ENCODE measurements at regions of chr5 and their contacts with region 1.

Region 1: GRCh38 chr5:137498736-137499505 is at the start of gene SPOCK1:
- DNase-seq: peak; percentile 94
- H3K4me3 ChIP-seq: peak within 1 kb of the TSS; percentile 54 to 77
- H3K27ac ChIP-seq: peak within 1 kb of the TSS in 1 of 2 experiments; percentile 55; a peak in 1 of 4 replicates
- H3K4me1 ChIP-seq: peaks cover 6% of the 10 kb centered on the region in 2 experiments; a peak in 2 of 4 replicates
- H3K27me3 ChIP-seq: no peaks in the 10 kb centered on the region
- CTCF ChIP-seq: peak; percentile 62
- EP300 ChIP-seq: 0 out of 4 replicates have a peak, but pooled peaks of 1 of the 2 experiments have one; percentile 11
- RAD21 ChIP-seq: peak; percentile 81
- polyA plus RNA-seq, gene SPOCK1: 9.1 and 11.3 TPM in 2 replicates

Region 2: GRCh38 chr5:137328463-137328862 is 170.5 kb before region 1 on chr5:
- CTCF ChIA-PET with region 1: interaction called, 19 read pairs
- POLR2A ChIA-PET with region 1: no interaction called
- DNase-seq: no peak
- H3K4me3 ChIP-seq: no peak overlapping the region
- H3K27ac ChIP-seq: no peak overlapping the region
- H3K4me1 ChIP-seq: no peaks in the 10 kb centered on the region; a peak in 1 of 4 replicates
- H3K27me3 ChIP-seq: no peaks in the 10 kb centered on the region
- CTCF ChIP-seq: no peak
- EP300 ChIP-seq: no peak
- RAD21 ChIP-seq: no peak

Region 3: DNA sequence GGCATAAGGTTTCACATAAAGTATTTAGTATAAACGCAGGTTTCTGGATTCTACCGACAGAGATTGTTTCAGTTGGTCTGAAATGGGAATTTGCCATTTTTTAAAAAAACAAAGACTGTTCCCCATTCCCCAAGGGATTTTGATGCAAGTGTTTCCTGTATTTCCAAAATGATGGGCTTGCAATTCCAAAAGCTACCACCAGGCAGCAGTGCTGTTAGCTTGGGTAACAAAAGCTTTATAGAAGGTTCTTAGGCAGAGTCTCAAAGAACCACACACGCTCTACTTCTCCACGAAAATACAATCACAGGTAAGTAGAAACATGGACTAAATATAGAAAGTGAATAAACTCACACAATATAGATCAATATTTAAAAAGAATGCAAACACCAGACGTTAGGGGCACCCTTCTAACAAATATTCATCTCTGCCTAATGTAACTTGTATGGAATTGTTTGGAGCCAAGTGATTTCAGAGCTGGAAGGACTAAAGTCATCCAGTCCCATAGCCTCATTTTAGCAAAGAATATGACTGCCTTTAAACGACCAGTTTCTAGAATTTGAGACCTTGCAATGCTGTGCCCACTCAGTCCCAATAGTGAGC is 154.1 kb before region 1 on chr5:
- CTCF ChIA-PET with region 1: interaction called, 46 read pairs
- POLR2A ChIA-PET with region 1: no interaction called
- DNase-seq: peak; percentile 28
- H3K4me3 ChIP-seq: peak overlapping the region in 1 of 2 experiments; percentile 18; a peak in 1 of 4 replicates
- H3K27ac ChIP-seq: no peak overlapping the region
- H3K4me1 ChIP-seq: peaks cover 12 to 14% of the 10 kb centered on the region in 2 experiments; a peak in 3 of 4 replicates
- H3K27me3 ChIP-seq: no peaks in the 10 kb centered on the region
- CTCF ChIP-seq: peak; percentile 81
- EP300 ChIP-seq: no peak
- RAD21 ChIP-seq: peak; percentile 80

Region 4: GRCh38 chr5:137461391-137462264 is 37.3 kb before region 1 on chr5:
- CTCF ChIA-PET with region 1: interaction called, 17 read pairs
- POLR2A ChIA-PET with region 1: interaction called, 3 read pairs
- DNase-seq: peak; percentile 14
- H3K4me3 ChIP-seq: no peak overlapping the region
- H3K27ac ChIP-seq: peak overlapping the region; percentile 7 to 90; a peak in 3 of 4 replicates
- H3K4me1 ChIP-seq: peaks cover 13 to 31% of the 10 kb centered on the region in 2 experiments
- H3K27me3 ChIP-seq: no peaks in the 10 kb centered on the region
- CTCF ChIP-seq: peak; percentile 35
- EP300 ChIP-seq: peak in 1 of 2 experiments; percentile 82; a peak in 2 of 4 replicates
- RAD21 ChIP-seq: no peak

Region 5: GRCh38 chr5:137470111-137470920 is 28.6 kb before region 1 on chr5:
- CTCF ChIA-PET with region 1: interaction called, 11 read pairs
- POLR2A ChIA-PET with region 1: no interaction called
- DNase-seq: no peak
- H3K4me3 ChIP-seq: no peak overlapping the region
- H3K27ac ChIP-seq: peak overlapping the region in 1 of 2 experiments; percentile 97; a peak in 3 of 4 replicates
- H3K4me1 ChIP-seq: peaks cover 5 to 28% of the 10 kb centered on the region in 2 experiments
- H3K27me3 ChIP-seq: no peaks in the 10 kb centered on the region
- CTCF ChIP-seq: no peak
- EP300 ChIP-seq: peak in 1 of 2 experiments; percentile 87; a peak in 2 of 4 replicates
- RAD21 ChIP-seq: no peak